PC-3 (cell line): ENCODE measurements at regions of chr18 and their contacts with region 1.

Region 1: DNA sequence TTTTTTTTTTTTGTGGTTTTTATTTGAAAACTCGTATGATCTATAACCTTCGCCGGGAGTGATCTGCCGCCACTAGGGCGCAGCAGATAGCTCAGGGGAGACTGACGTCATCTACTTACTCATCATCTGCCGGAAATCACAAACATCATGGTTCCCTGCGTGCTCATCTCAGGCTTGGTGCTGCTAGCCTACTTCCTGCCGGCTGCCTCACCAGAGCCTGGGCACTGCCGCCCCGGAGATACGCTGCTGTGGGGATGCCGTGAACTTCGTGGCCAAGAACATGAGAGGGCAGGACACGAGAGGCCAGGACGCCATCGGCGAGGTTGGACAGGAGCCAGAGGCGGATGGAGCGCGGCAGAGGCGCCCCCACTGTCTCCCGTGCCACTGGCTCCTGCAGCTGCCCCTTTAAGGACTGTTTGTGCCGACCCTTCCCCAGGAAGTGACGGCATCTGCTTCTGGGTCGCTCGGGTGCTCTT is 68.8 kb downstream of the DOK6 start:
- DNase-seq: peak; percentile 78
- ATAC-seq: peak; percentile 94
- H3K4me3 ChIP-seq: peak overlapping the region; percentile 59
- H3K27ac ChIP-seq: no peak overlapping the region
- H3K4me1 ChIP-seq: no peaks in the 10 kb centered on the region
- H3K27me3 ChIP-seq: no peaks in the 10 kb centered on the region
- CTCF ChIP-seq: peak; percentile 79

Region 2: DNA sequence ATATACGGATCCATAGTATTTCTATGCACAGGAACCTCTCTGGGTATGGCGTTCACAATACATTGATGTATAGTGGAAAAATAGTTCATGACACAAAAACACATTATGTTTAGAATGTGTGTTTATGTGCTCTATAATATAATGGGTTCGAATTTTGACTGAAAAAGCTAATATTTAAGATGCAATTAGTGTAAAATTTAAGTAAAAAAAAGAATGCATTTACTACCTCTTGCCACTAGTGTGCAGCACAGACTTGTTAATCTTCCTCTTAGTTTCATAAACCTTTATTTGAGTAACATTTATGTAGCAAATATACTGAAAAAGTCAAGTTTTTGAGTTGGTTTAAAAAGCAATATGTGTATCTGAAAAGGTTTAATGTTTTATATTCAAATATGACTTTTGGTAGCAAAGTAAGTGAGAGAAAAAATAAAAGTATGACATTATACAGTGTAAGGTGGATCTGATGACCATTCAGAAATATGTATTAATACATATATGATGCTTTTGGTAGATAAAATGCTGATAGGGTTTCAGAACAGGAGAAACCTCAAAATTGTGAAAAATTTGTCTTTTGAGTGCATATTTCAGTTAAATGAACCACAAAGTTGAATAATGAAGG is 622.2 kb before region 1 on chr18:
- CTCF ChIA-PET with region 1: no interaction called
- POLR2A ChIA-PET with region 1: no interaction called
- intact Hi-C with region 1: loop called (anchors 2 kb)
- DNase-seq: peak; percentile 44
- ATAC-seq: no peak
- H3K4me3 ChIP-seq: no peak overlapping the region
- H3K27ac ChIP-seq: no peak overlapping the region
- H3K4me1 ChIP-seq: no peaks in the 10 kb centered on the region
- H3K27me3 ChIP-seq: no peaks in the 10 kb centered on the region
- CTCF ChIP-seq: peak; percentile 80

Region 3: DNA sequence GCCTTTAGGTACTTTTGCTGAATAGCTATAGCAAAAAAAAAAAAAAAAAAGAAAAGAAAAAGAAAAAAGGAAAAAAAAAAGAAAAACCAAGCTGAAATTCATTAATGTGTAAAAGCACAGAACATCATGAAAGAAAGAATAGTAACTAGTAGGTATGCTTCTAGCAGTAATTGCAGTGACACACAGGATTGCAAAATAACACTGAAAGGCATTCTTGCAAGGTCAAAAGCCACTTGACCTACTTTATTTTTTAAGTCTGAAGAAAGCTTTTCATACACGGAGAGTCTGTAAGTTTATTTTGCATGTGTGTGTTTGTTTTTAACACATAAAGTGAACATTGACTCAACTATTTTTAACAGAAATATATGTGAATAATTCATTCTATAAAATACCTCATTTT is 14.4 kb before region 1 on chr18:
- CTCF ChIA-PET with region 1: no interaction called
- POLR2A ChIA-PET with region 1: no interaction called
- intact Hi-C with region 1: no loop called
- DNase-seq: no peak
- ATAC-seq: no peak
- H3K4me3 ChIP-seq: no peak overlapping the region
- H3K27ac ChIP-seq: no peak overlapping the region
- H3K4me1 ChIP-seq: no peaks in the 10 kb centered on the region
- H3K27me3 ChIP-seq: no peaks in the 10 kb centered on the region
- CTCF ChIP-seq: no peak

Region 4: DNA sequence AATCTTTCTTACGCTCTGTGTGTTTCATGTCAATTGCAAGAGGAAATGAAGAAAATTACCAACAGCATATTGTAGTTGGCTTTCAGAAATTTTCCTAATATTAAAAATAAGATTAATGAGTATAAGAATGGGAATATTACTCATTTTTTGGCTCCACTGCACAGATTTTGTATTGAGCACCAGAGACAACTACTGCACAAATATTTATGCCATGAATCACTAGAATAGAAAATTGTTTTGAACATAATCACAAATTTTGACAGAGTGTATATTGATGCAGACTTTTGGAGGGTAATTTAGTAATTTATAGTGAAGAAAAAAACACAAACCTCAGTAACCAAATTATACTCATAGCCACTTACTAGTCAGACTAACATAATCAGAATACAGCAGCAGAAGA is 49.5 kb after region 1 on chr18:
- CTCF ChIA-PET with region 1: no interaction called
- POLR2A ChIA-PET with region 1: no interaction called
- intact Hi-C with region 1: no loop called
- DNase-seq: peak; percentile 39
- ATAC-seq: peak; percentile 72
- H3K4me3 ChIP-seq: no peak overlapping the region
- H3K27ac ChIP-seq: no peak overlapping the region
- H3K4me1 ChIP-seq: no peaks in the 10 kb centered on the region
- H3K27me3 ChIP-seq: no peaks in the 10 kb centered on the region
- CTCF ChIP-seq: no peak

Region 5: DNA sequence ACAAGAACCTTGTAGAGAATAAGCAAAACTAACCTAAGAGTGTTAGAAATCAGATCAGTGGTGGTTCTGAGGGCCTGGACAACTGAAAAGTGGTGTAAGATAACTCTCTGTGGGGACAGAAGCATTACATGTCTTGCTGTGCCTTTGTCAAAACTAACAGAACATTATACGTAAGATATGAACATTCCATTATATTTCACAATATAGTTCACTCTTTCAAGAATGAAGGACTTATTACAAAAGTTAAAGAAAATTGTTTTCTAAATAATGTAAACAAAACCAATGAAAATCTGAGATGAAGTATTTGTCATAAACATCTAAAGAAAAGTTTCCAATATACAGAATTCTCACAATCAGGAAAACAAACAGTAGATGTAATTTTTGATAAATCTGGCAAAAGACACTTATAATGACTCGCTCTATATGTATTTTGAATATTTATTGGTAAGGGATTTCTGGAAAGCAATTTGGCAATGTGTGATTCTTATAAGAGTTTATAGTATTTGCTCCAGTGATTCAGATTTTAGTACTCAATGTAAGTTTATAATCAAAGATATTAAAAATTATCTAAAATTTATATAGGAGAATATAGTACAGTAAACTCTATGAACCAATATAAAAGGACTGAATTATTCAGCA is 219.8 kb after region 1 on chr18:
- CTCF ChIA-PET with region 1: no interaction called
- POLR2A ChIA-PET with region 1: no interaction called
- intact Hi-C with region 1: no loop called
- DNase-seq: no peak
- ATAC-seq: peak; percentile 43
- H3K4me3 ChIP-seq: no peak overlapping the region
- H3K27ac ChIP-seq: no peak overlapping the region
- H3K4me1 ChIP-seq: no peaks in the 10 kb centered on the region
- H3K27me3 ChIP-seq: no peaks in the 10 kb centered on the region
- CTCF ChIP-seq: no peak